ENCODE measurements at regions of chr21 and their contacts with region 1.

Region 1: DNA sequence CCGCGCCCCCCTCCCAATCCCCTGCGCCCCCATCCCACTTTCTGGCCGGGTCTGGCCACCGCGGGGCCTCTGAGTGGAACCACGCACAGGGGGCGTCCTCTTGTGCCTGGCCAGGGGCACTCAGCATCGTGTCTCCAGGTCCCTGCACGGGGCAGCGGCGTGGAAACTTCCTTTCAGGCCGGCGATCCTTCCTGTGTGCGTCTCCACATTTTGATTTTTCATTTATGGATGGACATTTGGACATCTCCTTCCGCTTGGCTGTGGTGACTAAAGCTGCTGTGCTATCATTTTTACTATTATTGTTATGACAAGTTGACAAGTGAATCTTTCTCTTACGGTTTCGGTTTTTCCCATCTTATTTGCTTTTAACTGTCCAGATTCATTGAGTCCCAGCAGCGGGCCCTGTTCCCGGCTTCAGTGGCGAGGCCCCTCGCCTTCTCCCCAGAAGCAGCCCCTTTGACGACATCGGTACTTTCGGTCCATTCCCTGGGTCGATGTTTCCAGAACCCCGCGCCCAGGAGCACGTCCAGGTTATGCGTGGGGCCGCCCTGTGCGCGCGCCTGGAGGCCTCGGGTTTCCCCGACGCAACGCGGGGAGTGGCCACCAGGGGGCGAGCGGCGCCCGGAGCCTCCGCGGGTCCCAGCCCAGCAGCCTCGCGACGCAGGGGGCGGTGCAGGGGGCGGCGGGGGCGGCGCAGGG is 12.4 kb upstream of the SLC19A1 start:
- DNase-seq: peak; percentile 95
- H3K4me3 ChIP-seq: peak overlapping the region; percentile 60 to 90
- H3K27ac ChIP-seq: peak overlapping the region; percentile 56 to 82; a peak in 3 of 4 replicates
- H3K4me1 ChIP-seq: peaks cover 0 to 18% of the 10 kb centered on the region in 2 experiments; a peak in 1 of 4 replicates
- H3K27me3 ChIP-seq: no peaks in the 10 kb centered on the region
- CTCF ChIP-seq: peak; percentile 69
- EP300 ChIP-seq: no peak
- RAD21 ChIP-seq: peak; percentile 72

Region 2: DNA sequence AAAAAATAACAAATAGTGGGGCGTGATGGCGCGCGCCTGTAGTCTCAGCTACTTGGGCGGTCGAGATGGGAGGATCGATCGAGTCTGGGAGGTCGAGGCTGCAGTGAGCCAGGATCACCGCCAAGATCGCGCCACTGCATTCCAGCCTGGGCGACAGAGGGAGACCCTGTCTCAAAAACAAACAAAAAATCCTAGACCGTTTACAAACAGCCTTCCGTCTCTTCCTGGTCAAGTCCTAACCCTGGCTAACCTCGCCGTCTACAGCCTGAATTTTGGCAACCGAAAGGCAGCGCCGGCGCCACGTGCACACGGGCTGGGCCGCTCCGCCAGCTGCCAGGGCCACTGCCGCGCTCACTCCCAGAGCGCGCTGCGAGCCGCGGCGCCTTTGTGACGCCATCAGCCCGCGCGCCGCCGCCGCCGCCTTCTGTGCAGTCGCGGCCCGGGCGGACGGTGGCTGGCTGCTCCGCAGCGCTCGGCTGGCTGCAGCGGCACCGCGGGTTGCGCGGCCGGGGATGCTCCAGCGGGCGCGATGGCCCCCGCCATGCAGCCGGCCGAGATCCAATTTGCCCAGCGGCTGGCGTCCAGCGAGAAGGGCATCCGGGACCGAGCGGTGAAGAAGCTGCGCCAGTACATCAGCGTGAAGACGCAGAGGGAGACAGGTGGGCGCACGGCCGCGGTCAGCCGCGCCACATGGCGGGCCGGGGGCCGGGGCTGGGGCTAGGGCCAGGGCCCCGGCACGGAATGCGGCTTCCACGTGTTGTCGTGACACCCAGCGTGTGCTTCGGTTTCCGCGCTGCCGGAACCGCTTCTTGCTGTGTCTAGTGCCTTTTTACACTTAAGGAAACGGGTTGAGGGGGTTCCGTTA is 1895.3 kb before region 1 on chr21 and contains the starts of genes HSF2BP and RRP1B:
- CTCF ChIA-PET with region 1: no interaction called
- POLR2A ChIA-PET with region 1: no interaction called
- DNase-seq: peak; percentile 97
- H3K4me3 ChIP-seq: peak within 1 kb of the TSS; percentile 88 to 94
- H3K27ac ChIP-seq: peak within 1 kb of the TSS; percentile 75 to 77
- H3K4me1 ChIP-seq: peaks cover 5 to 13% of the 10 kb centered on the region in 2 experiments; a peak in 3 of 4 replicates
- H3K27me3 ChIP-seq: no peaks in the 10 kb centered on the region
- CTCF ChIP-seq: peak; percentile 23
- EP300 ChIP-seq: 0 out of 4 replicates have a peak, but pooled peaks of 1 of the 2 experiments have one; percentile 5
- RAD21 ChIP-seq: no peak; the same call in 1 of the 2 replicates
- polyA plus RNA-seq, gene HSF2BP: 1.1 TPM in 2 replicates
- polyA plus RNA-seq, gene RRP1B: 9.6 and 10.4 TPM in 2 replicates

Region 3: DNA sequence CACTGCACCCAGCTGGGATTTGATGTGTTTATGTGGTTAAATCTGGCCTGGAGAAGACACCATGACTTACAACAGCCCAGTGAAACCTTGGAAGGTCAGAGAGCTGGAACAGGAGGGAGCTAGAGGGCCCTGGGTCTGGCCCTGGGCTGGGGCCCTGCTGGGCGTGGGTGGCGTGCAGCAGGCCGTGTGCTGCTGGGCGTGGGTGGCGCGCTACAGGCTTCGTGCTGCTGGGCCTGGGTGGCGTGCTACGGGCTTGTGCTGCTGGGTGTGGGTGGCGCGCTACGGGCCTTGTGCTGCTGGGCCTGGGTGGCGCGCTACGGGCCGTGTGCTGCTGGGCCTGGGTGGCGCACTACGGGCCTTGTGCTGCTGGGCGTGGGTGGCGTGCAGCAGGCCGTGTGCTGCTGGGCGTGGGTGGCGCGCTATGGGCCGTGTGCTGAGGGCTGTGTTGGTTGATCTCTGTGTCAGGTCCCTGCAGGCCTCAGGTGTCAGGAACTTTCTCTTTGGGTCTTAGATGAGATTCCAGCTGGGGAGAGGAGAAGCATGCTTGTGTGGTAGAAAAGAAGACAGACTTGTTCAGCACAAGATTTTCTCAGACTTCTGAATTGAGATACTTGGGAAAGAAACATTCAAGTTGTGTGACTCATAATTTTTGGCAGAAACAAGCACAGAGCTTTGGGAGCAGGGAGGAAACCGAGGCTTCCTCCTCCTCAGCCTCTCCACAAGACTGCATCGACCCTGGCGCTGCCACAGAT is 83.7 kb before region 1 on chr21:
- CTCF ChIA-PET with region 1: no interaction called
- POLR2A ChIA-PET with region 1: no interaction called
- DNase-seq: no peak
- H3K4me3 ChIP-seq: no peak overlapping the region
- H3K27ac ChIP-seq: peak overlapping the region; percentile 1 to 85; a peak in 3 of 4 replicates
- H3K4me1 ChIP-seq: peaks cover 16 to 26% of the 10 kb centered on the region in 2 experiments; a peak in 3 of 4 replicates
- H3K27me3 ChIP-seq: no peaks in the 10 kb centered on the region
- CTCF ChIP-seq: no peak
- EP300 ChIP-seq: no peak
- RAD21 ChIP-seq: no peak

Region 4: DNA sequence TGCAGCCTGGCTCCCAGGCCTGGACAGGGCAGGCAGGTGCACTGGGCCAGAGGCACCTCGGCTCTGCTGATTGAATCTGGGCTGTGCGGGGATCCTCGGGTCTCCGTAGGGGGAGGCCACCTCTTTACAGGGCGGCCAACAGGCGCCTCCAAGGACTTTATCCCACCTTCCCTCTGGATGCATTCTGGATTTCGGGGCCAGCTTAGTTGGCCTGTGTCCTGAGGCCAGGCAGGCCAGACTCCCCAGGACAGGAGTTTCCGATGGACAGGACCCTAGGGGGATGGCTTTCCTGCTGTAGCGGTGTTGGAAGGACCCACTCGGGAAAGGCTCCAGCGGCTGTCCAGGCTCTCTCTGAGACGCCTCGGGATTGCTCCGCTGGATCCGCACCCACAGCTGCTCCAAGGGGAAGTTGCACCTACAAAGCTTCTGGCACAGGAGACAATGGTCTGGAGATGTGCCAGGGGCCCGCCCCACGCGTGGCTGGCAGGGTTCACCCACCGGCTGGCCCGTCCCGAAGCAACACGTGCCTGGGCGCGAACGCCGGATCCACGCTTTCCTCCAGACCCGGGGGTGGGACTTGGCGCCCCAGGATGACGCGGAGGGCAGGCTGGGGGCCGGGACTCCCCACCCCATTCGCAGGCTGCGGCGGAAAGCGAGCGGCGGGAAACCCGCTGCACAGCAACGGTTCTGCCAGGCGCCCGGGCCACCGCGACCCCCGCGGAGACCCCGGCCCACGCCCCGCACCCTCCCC is 13.2 kb before region 1 on chr21:
- CTCF ChIA-PET with region 1: interaction called, 13 read pairs
- POLR2A ChIA-PET with region 1: no interaction called
- DNase-seq: peak; percentile 95
- H3K4me3 ChIP-seq: peak overlapping the region; percentile 64 to 66
- H3K27ac ChIP-seq: peak overlapping the region in 1 of 2 experiments; percentile 74; a peak in 2 of 4 replicates
- H3K4me1 ChIP-seq: peaks cover 0 to 36% of the 10 kb centered on the region in 2 experiments; a peak in 1 of 4 replicates
- H3K27me3 ChIP-seq: no peaks in the 10 kb centered on the region
- CTCF ChIP-seq: no peak
- EP300 ChIP-seq: no peak
- RAD21 ChIP-seq: no peak

Region 5: DNA sequence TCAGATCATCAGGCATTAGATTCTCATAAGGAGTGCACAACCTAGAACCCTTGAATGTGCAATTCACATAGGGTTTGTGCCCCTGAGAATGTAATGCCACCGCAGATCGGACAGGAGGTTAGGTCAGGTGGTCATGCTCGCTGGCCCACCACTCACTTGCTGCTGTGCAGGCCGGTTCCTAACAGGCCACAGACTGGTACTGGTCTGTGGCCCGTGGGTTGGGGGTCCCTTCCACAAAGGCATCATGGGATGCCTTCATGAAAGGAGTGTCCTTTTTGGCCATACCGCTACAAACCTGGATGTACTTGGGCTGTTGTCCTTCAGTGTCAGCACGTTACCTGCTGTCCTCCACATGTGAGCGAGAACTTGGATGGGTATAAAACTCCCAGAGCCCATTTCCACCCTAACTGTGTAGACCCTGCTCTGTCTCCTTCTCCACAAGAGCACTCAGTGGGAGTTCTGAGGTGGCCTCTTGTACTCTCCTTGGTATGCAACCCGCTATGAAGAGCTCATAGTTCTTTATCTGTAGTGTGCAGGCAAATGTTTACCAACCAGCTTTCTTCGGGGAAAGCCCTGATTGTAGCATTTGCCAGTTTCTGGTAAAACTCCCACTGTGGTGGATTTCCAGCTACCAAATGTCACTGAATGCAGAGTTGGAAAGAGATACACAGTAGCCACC is 29.3 kb after region 1 on chr21:
- CTCF ChIA-PET with region 1: interaction called, 10 read pairs
- POLR2A ChIA-PET with region 1: no interaction called
- DNase-seq: no peak
- H3K4me3 ChIP-seq: no peak overlapping the region
- H3K27ac ChIP-seq: no peak overlapping the region
- H3K4me1 ChIP-seq: peaks cover 0 to 11% of the 10 kb centered on the region in 2 experiments; a peak in 1 of 4 replicates
- H3K27me3 ChIP-seq: no peaks in the 10 kb centered on the region
- CTCF ChIP-seq: no peak
- EP300 ChIP-seq: no peak
- RAD21 ChIP-seq: no peak

Region 6: GRCh38 chr21:45615145-45615711 is 60.6 kb after region 1 on chr21:
- CTCF ChIA-PET with region 1: interaction called, 25 read pairs
- POLR2A ChIA-PET with region 1: interaction called, 3 read pairs
- DNase-seq: peak; percentile 72
- H3K4me3 ChIP-seq: peak overlapping the region in 1 of 2 experiments; percentile 2; a peak in 1 of 4 replicates
- H3K27ac ChIP-seq: no peak overlapping the region
- H3K4me1 ChIP-seq: peaks cover 7 to 29% of the 10 kb centered on the region in 2 experiments; a peak in 2 of 4 replicates
- H3K27me3 ChIP-seq: no peaks in the 10 kb centered on the region; the same call in 1 of the 2 replicates
- CTCF ChIP-seq: no peak
- EP300 ChIP-seq: no peak
- RAD21 ChIP-seq: peak; percentile 22; the same call in 1 of the 2 replicates

Region 7: DNA sequence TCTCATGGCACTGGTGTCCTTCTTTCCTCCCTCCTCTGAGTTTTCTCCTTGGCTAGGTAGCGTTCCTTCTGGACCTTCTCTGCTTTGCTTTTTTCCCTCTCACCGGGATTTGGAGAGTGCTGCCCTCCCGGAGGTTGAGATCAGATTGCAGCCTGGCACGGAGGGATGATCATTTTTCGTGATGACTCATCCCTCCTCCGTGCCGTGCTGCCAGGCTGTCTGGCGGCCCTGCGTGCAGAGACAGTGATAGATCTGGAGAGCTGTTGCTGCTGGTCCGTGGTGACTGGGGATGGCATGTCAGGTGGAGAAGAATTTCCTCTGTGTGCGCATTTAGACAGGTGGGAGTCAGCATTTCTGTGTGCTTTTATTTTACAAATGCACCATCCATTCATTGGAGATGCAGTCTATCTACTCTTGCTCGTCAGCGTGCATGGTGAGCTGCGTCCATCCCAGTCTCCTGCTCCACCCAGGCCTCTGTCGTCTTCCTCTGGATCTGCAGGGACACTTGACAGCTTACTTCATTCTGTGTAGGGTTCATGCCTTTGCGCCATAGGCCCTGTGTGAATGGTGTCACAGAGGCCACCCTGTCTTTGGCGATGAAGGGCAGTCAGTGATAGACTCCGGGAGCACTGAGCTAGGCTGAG is 193.3 kb after region 1 on chr21:
- CTCF ChIA-PET with region 1: interaction called, 12 read pairs
- POLR2A ChIA-PET with region 1: interaction called, 3 read pairs
- DNase-seq: peak; percentile 85
- H3K4me3 ChIP-seq: peak overlapping the region; percentile 24 to 29; a peak in 1 of 4 replicates
- H3K27ac ChIP-seq: peak overlapping the region; percentile 70 to 96
- H3K4me1 ChIP-seq: peaks cover 13 to 55% of the 10 kb centered on the region in 2 experiments
- H3K27me3 ChIP-seq: no peaks in the 10 kb centered on the region
- CTCF ChIP-seq: no peak
- EP300 ChIP-seq: peak; percentile 39 to 81; a peak in 1 of 4 replicates
- RAD21 ChIP-seq: peak; percentile 49

Region 8: DNA sequence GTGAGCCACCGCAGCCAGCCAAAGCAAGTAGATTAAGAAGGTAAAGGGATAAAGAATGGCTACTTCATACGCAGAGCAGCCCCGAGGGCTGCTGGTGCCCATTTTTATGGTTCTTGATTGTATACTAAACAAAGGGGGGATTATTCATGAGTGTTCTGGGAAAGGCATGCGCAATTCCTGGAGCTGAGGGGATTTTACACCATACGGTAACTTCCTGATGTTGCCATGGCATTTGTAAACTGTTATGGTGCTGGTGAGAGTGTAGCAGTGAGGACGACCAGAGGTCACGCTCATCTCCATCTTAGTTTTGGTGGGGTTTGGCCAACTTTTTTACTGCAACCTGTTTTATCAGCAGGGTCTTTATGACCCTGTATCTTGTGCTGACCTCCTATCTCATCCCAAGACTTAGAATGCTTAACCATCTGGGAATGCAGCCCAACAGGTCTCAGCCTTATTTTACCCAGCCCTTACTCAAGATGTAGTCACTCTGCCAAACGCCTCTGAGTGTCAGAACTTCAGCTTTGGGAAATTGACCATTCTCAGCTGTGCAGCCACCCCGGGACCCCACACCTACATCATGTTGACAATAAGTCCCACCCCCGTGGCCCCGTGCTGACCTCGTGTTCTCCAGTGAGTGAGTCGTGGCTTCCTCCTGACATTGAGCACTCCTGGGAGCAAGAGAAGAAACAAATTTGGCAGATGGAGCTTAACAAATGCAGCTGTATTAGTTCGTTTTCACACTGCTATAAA is 277.5 kb after region 1 on chr21:
- CTCF ChIA-PET with region 1: interaction called, 27 read pairs
- POLR2A ChIA-PET with region 1: no interaction called
- DNase-seq: no peak
- H3K4me3 ChIP-seq: no peak overlapping the region
- H3K27ac ChIP-seq: no peak overlapping the region
- H3K4me1 ChIP-seq: peaks cover 0 to 53% of the 10 kb centered on the region in 2 experiments; a peak in 1 of 4 replicates
- H3K27me3 ChIP-seq: no peaks in the 10 kb centered on the region
- CTCF ChIP-seq: no peak
- EP300 ChIP-seq: no peak
- RAD21 ChIP-seq: no peak

Measured in SK-N-SH (cell line).